T-cell (primary cell): ENCODE measurements at regions of chr15 and their contacts with region 1.

Region 1: GRCh38 chr15:29312387-29312786 is 42.8 kb upstream of the NSMCE3 start:
- DNase-seq: no peak
- ATAC-seq: no peak
- H3K4me3 ChIP-seq: no peak overlapping the region
- H3K4me3 Mint-ChIP-seq: no peak overlapping the region
- H3K27ac ChIP-seq: no peak overlapping the region
- H3K27ac Mint-ChIP-seq: no peak overlapping the region
- H3K4me1 ChIP-seq: no peaks in the 10 kb centered on the region
- H3K4me1 Mint-ChIP-seq: no peaks in the 10 kb centered on the region
- H3K27me3 ChIP-seq: peaks cover 0 to 5% of the 10 kb centered on the region in 2 experiments
- H3K27me3 Mint-ChIP-seq: peaks cover 7 to 10% of the 10 kb centered on the region in 2 donors

Region 2: DNA sequence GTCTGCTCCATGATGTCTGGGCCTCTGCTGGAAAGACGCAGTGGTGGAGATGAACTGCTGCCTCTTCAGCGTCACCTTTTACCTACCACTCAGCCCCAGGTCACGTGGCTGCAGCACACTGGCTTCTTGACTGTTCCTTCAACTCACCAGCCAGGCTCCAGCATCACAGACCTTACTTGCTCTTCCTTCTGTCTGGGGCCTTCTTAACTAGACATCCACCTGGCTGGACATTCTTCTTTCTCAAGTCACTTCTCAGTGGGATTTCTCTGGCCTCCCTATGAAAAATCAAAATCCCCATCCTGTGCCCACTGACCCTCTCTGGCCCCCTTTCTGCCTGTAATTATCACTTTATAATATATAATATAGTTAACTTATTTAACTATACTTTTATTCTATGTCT is 13.1 kb before region 1 on chr15:
- CTCF ChIA-PET with region 1: no interaction called
- POLR2A ChIA-PET with region 1: interaction called in 1 of 2 experiments, 13 read pairs
- DNase-seq: no peak
- ATAC-seq: no peak
- H3K4me3 ChIP-seq: no peak overlapping the region
- H3K4me3 Mint-ChIP-seq: no peak overlapping the region
- H3K27ac ChIP-seq: no peak overlapping the region
- H3K27ac Mint-ChIP-seq: no peak overlapping the region
- H3K4me1 ChIP-seq: no peaks in the 10 kb centered on the region
- H3K4me1 Mint-ChIP-seq: no peaks in the 10 kb centered on the region
- H3K27me3 ChIP-seq: peaks cover 0 to 4% of the 10 kb centered on the region in 2 experiments
- H3K27me3 Mint-ChIP-seq: no peaks in the 10 kb centered on the region